Activated naive CD4-positive, alpha-beta T cell treated with anti-CD3 and anti-CD28 coated beads for 36 hours (primary cell): ENCODE measurements at regions of chr16 and their contacts with region 1.

Region 1: DNA sequence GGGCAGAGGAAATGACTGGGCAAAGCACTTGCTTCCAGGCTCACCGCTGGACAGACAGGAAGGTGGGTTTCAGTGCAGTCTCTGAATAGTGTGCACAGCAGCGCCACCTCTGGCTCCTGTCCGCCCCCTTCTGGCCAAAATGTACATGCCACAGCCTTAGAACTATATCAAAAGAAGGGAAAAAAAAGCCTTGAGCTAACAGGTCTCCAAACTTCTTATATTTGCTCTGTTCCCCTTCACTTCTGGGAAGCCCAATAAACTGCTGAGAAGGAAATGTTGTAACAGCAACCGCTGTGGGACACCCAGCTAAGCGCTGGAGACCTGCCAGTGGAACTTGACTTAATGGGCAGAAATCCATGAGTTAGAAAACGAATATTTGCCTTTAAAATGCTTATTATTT is 17.5 kb downstream of the COG7 start:
- DNase-seq: peak; percentile 76
- H3K4me3 Mint-ChIP-seq: no peak overlapping the region
- H3K27ac Mint-ChIP-seq: no peak overlapping the region
- H3K4me1 Mint-ChIP-seq: no peaks in the 10 kb centered on the region
- H3K27me3 Mint-ChIP-seq: no peaks in the 10 kb centered on the region

Region 2: DNA sequence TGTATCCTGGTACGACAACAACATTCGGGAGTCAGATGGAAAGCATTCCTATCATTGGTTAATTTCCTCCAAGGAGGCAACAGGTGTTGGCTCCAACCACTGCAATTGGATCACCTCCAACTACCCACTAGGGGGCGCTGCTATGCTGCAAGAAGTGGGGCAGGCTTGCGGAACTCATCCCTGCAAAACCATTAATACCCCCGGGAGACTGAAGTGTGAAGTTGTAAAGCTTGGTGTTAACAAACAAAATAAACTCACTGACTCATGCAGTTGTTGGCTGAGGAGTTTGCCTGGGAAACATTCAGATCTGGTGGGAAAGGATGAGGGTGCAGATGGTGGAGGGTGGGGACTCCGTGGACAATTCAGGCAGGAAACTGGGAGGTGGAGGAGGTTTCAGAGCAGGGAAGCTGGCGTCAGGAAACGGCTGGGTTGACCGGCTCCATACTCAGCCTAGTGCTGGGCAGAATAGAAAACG is 536.6 kb before region 1 on chr16:
- CTCF ChIA-PET with region 1: interaction called, 6 read pairs
- intact Hi-C with region 1: loop called (anchors 2 kb)
- DNase-seq: peak; percentile 76
- H3K4me3 Mint-ChIP-seq: no peak overlapping the region
- H3K27ac Mint-ChIP-seq: no peak overlapping the region
- H3K4me1 Mint-ChIP-seq: no peaks in the 10 kb centered on the region
- H3K27me3 Mint-ChIP-seq: peaks cover 19% of the 10 kb centered on the region

Region 3: GRCh38 chr16:23026784-23027362 is 408.6 kb before region 1 on chr16:
- CTCF ChIA-PET with region 1: no interaction called
- intact Hi-C with region 1: no loop called
- DNase-seq: peak; percentile 27
- H3K4me3 Mint-ChIP-seq: no peak overlapping the region
- H3K27ac Mint-ChIP-seq: no peak overlapping the region
- H3K4me1 Mint-ChIP-seq: no peaks in the 10 kb centered on the region
- H3K27me3 Mint-ChIP-seq: peaks cover 24% of the 10 kb centered on the region

Region 4: GRCh38 chr16:23040246-23040645 is 395.3 kb before region 1 on chr16:
- CTCF ChIA-PET with region 1: no interaction called
- intact Hi-C with region 1: no loop called
- DNase-seq: no peak
- H3K4me3 Mint-ChIP-seq: no peak overlapping the region
- H3K27ac Mint-ChIP-seq: no peak overlapping the region
- H3K4me1 Mint-ChIP-seq: peaks cover 5% of the 10 kb centered on the region
- H3K27me3 Mint-ChIP-seq: peaks cover 20% of the 10 kb centered on the region

Region 5: GRCh38 chr16:23182460-23183309 is 252.8 kb before region 1 on chr16 and contains the start of gene SCNN1G:
- CTCF ChIA-PET with region 1: interaction called, 65 read pairs
- intact Hi-C with region 1: loop called (anchors 1 kb)
- DNase-seq: peak; percentile 88
- H3K4me3 Mint-ChIP-seq: peak within 1 kb of the TSS; percentile 30
- H3K27ac Mint-ChIP-seq: no peak within 1 kb of the TSS
- H3K4me1 Mint-ChIP-seq: peaks cover 7% of the 10 kb centered on the region
- H3K27me3 Mint-ChIP-seq: peaks cover 58% of the 10 kb centered on the region
- total RNA-seq, gene SCNN1G: not detected

Region 6: GRCh38 chr16:23414731-23415130 is 20.8 kb before region 1 on chr16:
- CTCF ChIA-PET with region 1: interaction called, 21 read pairs
- intact Hi-C with region 1: no loop called
- DNase-seq: no peak
- H3K4me3 Mint-ChIP-seq: no peak overlapping the region
- H3K27ac Mint-ChIP-seq: no peak overlapping the region
- H3K4me1 Mint-ChIP-seq: no peaks in the 10 kb centered on the region
- H3K27me3 Mint-ChIP-seq: no peaks in the 10 kb centered on the region

Region 7: GRCh38 chr16:23423496-23424049 is 11.9 kb before region 1 on chr16:
- CTCF ChIA-PET with region 1: interaction called, 20 read pairs
- intact Hi-C with region 1: no loop called
- DNase-seq: no peak
- H3K4me3 Mint-ChIP-seq: no peak overlapping the region
- H3K27ac Mint-ChIP-seq: no peak overlapping the region
- H3K4me1 Mint-ChIP-seq: no peaks in the 10 kb centered on the region
- H3K27me3 Mint-ChIP-seq: no peaks in the 10 kb centered on the region

Region 8: DNA sequence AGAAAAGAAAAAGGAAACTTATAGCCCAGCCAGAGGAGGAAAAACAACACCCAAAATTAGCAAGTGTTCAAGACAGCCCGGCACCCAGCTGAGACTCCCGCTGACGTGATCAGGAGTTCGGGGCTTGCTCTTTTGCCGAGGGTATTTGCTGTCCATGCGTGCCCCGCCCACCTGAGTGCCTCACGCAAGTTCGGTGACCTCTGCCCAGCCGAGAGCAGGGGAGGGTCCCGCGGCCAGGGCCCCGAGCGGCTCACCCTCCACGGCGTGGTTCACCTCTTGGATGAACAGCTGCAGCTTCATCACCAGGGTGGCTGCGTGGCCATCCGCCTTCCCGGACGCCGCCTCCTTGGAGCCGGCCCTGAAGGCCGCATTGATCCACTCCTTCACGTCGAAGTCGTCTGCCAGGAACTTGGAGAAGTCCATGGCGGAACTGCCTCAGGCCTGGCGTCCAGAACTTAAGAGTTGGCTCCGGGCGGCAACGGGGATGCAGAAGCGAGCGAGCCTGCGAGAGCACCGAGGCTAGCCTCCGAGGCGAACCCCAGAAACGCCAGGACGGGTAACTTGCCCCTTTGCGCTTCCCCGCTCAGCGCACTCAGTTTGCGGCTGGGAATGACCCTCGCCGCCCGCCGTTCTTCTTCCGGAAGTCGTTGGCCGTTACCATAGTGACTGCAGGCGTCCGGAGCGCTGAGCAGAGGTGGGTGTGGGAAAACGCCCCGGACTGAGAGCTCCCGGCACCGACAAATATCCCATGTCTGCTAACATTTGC is 17.3 kb after region 1 on chr16 and contains the start of gene COG7:
- CTCF ChIA-PET with region 1: interaction called, 16 read pairs
- intact Hi-C with region 1: no loop called
- DNase-seq: peak; percentile 89
- H3K4me3 Mint-ChIP-seq: peak within 1 kb of the TSS; percentile 97
- H3K27ac Mint-ChIP-seq: peak within 1 kb of the TSS; percentile 86
- H3K4me1 Mint-ChIP-seq: peaks cover 34% of the 10 kb centered on the region
- H3K27me3 Mint-ChIP-seq: no peaks in the 10 kb centered on the region
- total RNA-seq, gene COG7: 16.4 to 16.9 TPM